T-cell (primary cell): ENCODE measurements at regions of chr3 and their contacts with region 1.

Region 1: DNA sequence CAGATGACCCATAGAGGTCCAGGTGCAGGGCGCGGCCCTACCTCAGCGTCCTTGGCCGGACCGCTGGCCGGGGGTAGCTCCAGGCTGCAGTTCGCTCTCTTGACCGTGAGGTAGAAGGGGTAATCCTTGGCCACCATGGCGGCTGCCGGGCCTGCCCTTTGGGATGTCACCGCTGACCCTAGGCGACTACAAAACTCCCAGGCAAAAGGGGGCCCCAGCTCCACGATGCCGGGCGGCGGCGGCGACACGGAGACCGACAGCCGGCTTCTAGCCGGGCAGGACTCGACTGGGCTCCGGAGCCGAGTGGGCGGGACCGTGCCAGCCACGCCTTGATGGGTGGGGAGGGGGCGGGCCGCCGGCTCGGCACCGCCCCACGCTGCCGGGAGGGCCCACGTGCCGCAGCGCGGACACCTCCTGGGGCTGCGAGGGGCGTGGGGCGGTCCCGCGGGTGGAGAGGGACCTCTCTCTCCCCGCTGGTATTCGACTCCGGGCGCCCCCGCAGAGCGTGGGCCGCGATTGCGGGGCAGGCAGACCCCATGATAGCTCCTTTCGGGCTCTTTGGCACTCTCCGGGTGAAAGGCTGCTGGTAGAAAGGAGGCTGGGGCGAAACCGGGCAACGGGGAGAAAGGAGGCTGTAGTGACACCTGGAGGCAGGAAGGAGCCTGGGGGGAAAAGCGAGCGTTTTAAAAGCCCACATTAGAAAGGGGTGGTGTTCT is at the start of gene ARHGEF3:
- DNase-seq: peak; percentile 70 to 95 (median 83)
- ATAC-seq: peak; percentile 84 to 91 (median 86)
- H3K4me3 ChIP-seq: peak within 1 kb of the TSS; percentile 80 to 88
- H3K4me3 Mint-ChIP-seq: peak within 1 kb of the TSS; percentile 90 to 97 (median 93)
- H3K27ac ChIP-seq: peak within 1 kb of the TSS; percentile 60
- H3K27ac Mint-ChIP-seq: peak within 1 kb of the TSS; percentile 85 to 92
- H3K4me1 ChIP-seq: peaks cover 16 to 33% of the 10 kb centered on the region in 2 experiments
- H3K4me1 Mint-ChIP-seq: peaks cover 39 to 49% (median 40%) of the 10 kb centered on the region in 3 donors
- H3K27me3 ChIP-seq: no peaks in the 10 kb centered on the region
- H3K27me3 Mint-ChIP-seq: no peaks in the 10 kb centered on the region
- total RNA-seq, gene ARHGEF3: 93.4 to 132 (median 124) TPM

Region 2: GRCh38 chr3:56682462-56683121 is 119.2 kb before region 1 on chr3:
- CTCF ChIA-PET with region 1: interaction called in 1 of 2 experiments, 12 read pairs
- POLR2A ChIA-PET with region 1: interaction called, 4 to 5 read pairs
- DNase-seq: peak; percentile 63 to 87 (median 73)
- ATAC-seq: peak; percentile 76 to 80 (median 78)
- H3K4me3 ChIP-seq: peak overlapping the region; percentile 85 to 98
- H3K4me3 Mint-ChIP-seq: peak overlapping the region; percentile 94 to 95 (median 94)
- H3K27ac ChIP-seq: peak overlapping the region; percentile 99
- H3K27ac Mint-ChIP-seq: peak overlapping the region; percentile 94 to 96
- H3K4me1 ChIP-seq: peaks cover 6 to 17% of the 10 kb centered on the region in 2 experiments
- H3K4me1 Mint-ChIP-seq: peaks cover 43 to 51% (median 46%) of the 10 kb centered on the region in 3 donors
- H3K27me3 ChIP-seq: no peaks in the 10 kb centered on the region
- H3K27me3 Mint-ChIP-seq: no peaks in the 10 kb centered on the region

Region 3: GRCh38 chr3:56725175-56725574 is 76.6 kb before region 1 on chr3:
- CTCF ChIA-PET with region 1: interaction called, 12 to 37 read pairs
- POLR2A ChIA-PET with region 1: interaction called in 1 of 2 experiments, 9 read pairs
- DNase-seq: peak in 34 of 35 experiments; percentile 22 to 73 (median 51)
- ATAC-seq: peak; percentile 81 to 91 (median 86)
- H3K4me3 ChIP-seq: no peak overlapping the region
- H3K4me3 Mint-ChIP-seq: peak overlapping the region; percentile 11 to 58 (median 34)
- H3K27ac ChIP-seq: peak overlapping the region; percentile 52
- H3K27ac Mint-ChIP-seq: peak overlapping the region; percentile 87 to 91
- H3K4me1 ChIP-seq: peaks cover 24 to 34% of the 10 kb centered on the region in 2 experiments
- H3K4me1 Mint-ChIP-seq: peaks cover 59 to 68% (median 62%) of the 10 kb centered on the region in 3 donors
- H3K27me3 ChIP-seq: no peaks in the 10 kb centered on the region
- H3K27me3 Mint-ChIP-seq: no peaks in the 10 kb centered on the region

Region 4: GRCh38 chr3:56758539-56758981 is 43.3 kb before region 1 on chr3:
- CTCF ChIA-PET with region 1: interaction called, 11 to 108 read pairs
- POLR2A ChIA-PET with region 1: interaction called, 3 to 7 read pairs
- DNase-seq: peak in 4 of 35 experiments; percentile 5 to 44 (median 20)
- ATAC-seq: peak; percentile 38 to 67 (median 64)
- H3K4me3 ChIP-seq: no peak overlapping the region
- H3K4me3 Mint-ChIP-seq: peak overlapping the region; percentile 15 to 71 (median 57)
- H3K27ac ChIP-seq: peak overlapping the region; percentile 58
- H3K27ac Mint-ChIP-seq: peak overlapping the region; percentile 86 to 87
- H3K4me1 ChIP-seq: peaks cover 40 to 68% of the 10 kb centered on the region in 2 experiments
- H3K4me1 Mint-ChIP-seq: peaks cover 87 to 90% (median 88%) of the 10 kb centered on the region in 3 donors
- H3K27me3 ChIP-seq: no peaks in the 10 kb centered on the region
- H3K27me3 Mint-ChIP-seq: no peaks in the 10 kb centered on the region

Region 5: DNA sequence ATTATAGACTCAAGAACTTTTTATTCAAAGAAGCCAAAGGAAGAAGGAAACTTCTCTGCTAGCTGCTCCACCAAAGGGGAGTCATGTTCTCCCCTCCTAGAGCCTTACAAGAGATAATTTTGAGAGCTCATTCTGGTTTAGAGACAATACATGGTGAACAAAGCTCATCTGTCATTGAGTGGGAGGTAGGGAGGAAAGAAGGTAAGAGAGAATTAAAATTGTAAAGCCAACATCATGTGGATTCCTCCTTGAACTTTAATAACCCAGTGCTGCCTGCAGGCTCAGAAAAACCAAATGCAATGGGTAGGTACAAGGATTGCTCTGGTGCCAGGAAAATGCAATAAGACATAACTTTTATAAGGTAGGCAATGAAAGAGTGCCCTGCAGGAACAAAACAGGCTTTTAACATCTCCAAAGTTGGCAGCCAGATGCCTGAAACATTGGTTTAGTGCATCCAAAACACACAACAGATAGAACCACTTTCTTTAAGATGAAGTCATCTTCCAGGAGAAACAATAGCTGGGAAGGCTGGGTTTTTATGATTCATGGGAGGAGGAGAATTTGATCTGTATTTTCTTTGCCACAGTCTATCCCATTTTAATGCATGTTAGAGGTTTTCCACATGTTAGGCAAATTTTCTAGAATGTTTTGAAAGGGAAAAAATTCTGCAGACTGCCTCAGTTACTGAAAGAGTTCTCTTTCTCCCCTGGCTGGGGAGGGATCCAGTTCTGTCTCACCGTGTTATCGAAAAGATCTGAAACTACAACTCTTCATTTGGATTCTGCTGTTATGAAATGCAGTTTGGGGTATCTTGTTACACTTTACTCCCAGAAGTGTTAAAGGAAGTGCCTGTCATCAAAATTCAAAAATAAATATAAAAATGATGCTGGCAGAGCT is 11.2 kb after region 1 on chr3:
- CTCF ChIA-PET with region 1: interaction called, 4 to 10 read pairs
- POLR2A ChIA-PET with region 1: interaction called, 3 to 20 read pairs
- DNase-seq: no peak
- ATAC-seq: no peak
- H3K4me3 ChIP-seq: no peak overlapping the region
- H3K4me3 Mint-ChIP-seq: peak overlapping the region; percentile 5 to 68 (median 32)
- H3K27ac ChIP-seq: peak overlapping the region; percentile 61
- H3K27ac Mint-ChIP-seq: peak overlapping the region; percentile 85 to 96
- H3K4me1 ChIP-seq: peaks cover 32 to 45% of the 10 kb centered on the region in 2 experiments
- H3K4me1 Mint-ChIP-seq: peaks cover 71 to 82% (median 78%) of the 10 kb centered on the region in 3 donors
- H3K27me3 ChIP-seq: no peaks in the 10 kb centered on the region
- H3K27me3 Mint-ChIP-seq: no peaks in the 10 kb centered on the region

Region 6: DNA sequence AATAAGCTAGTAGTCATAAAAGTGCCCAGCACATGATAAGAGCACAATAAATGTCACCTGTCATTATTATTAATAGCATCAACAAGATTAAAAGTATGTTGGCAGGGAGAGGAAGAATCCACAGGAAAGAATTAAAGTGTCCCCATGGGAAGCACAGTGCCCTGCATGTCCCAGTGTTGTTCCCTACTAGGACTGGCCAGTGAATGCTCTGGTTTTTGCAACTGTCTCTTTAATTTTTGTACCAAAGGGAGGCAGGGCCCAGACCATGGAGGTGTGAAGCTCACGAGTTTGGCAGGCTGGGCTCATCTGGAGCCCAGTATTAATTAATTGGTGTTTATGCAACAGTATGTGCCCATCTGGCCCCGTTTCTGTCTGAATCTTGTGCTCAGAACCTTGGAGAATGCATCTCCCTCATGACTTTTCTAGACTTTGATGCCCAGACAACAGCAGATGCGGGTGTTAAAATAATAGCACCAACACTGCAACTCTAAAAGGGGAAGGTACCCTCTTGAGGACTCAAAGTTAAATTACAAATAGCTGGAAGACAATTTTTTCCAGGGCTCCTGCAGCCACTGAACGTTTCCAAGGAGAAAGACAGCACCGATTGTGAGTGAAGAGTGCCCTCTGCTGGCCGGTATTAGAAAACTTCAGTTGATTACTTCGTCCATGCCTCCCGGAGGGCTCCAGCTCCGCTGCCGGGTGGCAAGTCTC is 186.8 kb after region 1 on chr3:
- CTCF ChIA-PET with region 1: interaction called, 12 to 42 read pairs
- POLR2A ChIA-PET with region 1: interaction called, 5 read pairs
- DNase-seq: peak; percentile 11 to 88 (median 58)
- ATAC-seq: peak; percentile 53 to 76 (median 70)
- H3K4me3 ChIP-seq: no peak overlapping the region
- H3K4me3 Mint-ChIP-seq: no peak overlapping the region
- H3K27ac ChIP-seq: no peak overlapping the region
- H3K27ac Mint-ChIP-seq: no peak overlapping the region
- H3K4me1 ChIP-seq: peaks cover 0 to 19% of the 10 kb centered on the region in 2 experiments
- H3K4me1 Mint-ChIP-seq: peaks cover 14 to 19% (median 16%) of the 10 kb centered on the region in 3 donors
- H3K27me3 ChIP-seq: peaks cover 0 to 13% of the 10 kb centered on the region in 2 experiments
- H3K27me3 Mint-ChIP-seq: peaks cover 3 to 17% of the 10 kb centered on the region in 2 donors